ENCODE measurements at regions of chr11 and their contacts with region 1.

Region 1: GRCh38 chr11:59171508-59172322 is at the start of gene DTX4:
- DNase-seq: peak; percentile 84
- ATAC-seq: peak; percentile 89
- H3K4me3 ChIP-seq: peak within 1 kb of the TSS; percentile 44 to 59
- H3K27ac ChIP-seq: no peak within 1 kb of the TSS; the same call in 1 of the 2 replicates
- H3K4me1 ChIP-seq: peaks cover 14 to 39% of the 10 kb centered on the region in 2 experiments; a peak in 3 of 4 replicates
- H3K27me3 ChIP-seq: no peaks in the 10 kb centered on the region
- CTCF ChIP-seq: peak; percentile 78 to 94 (median 83)
- POLR2A ChIP-seq: no peak
- RAD21 ChIP-seq: peak; percentile 94
- total RNA-seq, gene DTX4: 7.6 TPM

Region 2: DNA sequence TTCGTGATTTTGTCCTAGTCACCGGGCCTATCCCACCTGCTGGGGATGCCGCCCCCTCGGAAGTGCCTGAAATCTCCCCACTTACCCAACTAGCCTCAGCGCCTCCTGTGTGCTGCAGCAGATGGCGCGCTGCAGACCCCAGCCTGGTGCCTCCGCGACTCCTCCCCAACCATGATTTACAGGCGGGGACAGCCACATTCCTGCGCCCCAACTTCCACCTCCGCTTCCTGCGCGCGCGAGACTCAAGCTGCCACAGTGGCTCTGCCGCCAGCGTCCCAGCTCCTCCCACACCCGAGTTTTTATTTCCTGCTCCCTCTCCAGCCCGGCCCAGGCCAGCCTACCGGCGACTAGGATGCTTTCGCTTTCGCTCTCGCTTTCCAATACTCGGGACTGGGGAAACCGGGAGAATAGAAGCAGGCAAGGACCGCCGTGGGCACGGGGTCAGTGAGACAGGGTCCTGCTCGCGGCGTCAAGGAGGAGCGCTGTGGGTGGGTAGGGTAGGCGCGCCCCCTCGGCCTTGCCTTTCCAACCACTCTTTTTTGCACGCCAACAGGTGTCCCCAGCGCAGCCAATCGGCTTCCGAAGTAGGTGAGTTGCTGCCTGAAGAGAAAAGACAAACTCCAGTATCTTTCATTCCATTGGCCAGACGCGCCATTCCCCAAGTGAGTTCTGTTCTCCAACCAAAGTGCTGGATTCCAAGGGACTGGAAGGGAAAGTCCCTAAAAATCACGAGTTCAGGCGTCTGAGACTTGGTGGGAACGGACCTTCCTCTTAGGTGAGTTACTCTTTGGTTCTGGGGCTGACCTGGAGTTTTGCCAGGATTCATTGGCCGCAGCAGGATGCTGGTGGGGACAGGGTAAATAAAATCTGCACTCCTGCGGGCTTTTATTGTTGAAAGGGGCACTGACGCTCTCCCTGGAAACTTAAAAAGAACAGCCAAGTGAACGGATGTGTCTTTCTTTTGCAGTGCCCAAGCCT is 28.9 kb before region 1 on chr11 and contains the start of gene FAM111A:
- CTCF ChIA-PET with region 1: interaction called, 10 read pairs
- POLR2A ChIA-PET with region 1: no interaction called
- RAD21 ChIA-PET with region 1: no interaction called
- intact Hi-C with region 1: no loop called
- DNase-seq: peak; percentile 83
- ATAC-seq: peak; percentile 85
- H3K4me3 ChIP-seq: peak within 1 kb of the TSS; percentile 51 to 79
- H3K27ac ChIP-seq: peak within 1 kb of the TSS; percentile 67
- H3K4me1 ChIP-seq: peaks cover 15 to 34% of the 10 kb centered on the region in 2 experiments
- H3K27me3 ChIP-seq: no peaks in the 10 kb centered on the region
- CTCF ChIP-seq: peak in 2 of 3 experiments; percentile 9 to 21; a peak in 1 of 6 replicates
- POLR2A ChIP-seq: no peak
- RAD21 ChIP-seq: no peak
- total RNA-seq, gene FAM111A: 30.3 TPM

Region 3: DNA sequence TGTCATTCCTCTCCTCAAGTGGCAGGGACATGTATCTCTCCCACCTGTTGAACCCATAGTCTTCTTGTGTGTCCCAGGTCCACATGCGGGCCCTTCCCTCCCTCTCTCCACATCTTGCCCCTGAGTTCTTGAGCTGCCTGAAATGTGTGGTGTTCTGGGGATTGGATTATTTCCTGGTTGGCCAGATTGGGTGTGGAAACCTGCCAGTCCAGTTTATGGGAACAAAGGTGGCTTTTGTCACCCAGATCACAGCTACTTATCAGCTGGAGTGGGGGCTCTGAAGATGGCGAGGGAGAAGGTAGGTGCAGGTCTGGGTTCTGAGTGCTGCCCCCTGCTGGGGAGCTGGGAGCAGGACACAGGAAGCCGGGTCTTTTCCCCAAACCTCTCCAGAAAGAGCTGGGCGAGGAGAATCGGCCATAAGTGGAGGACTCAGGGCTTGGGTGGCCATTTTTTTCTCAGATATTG is 14.4 kb after region 1 on chr11:
- CTCF ChIA-PET with region 1: interaction called, 68 read pairs
- POLR2A ChIA-PET with region 1: interaction called, 4 read pairs
- RAD21 ChIA-PET with region 1: interaction called, 6 to 10 read pairs
- intact Hi-C with region 1: loop called (anchors 1 kb)
- DNase-seq: peak; percentile 57
- ATAC-seq: peak; percentile 92
- H3K4me3 ChIP-seq: peak overlapping the region in 1 of 2 experiments; percentile 7; a peak in 1 of 4 replicates
- H3K27ac ChIP-seq: no peak overlapping the region; the same call in 1 of the 2 replicates
- H3K4me1 ChIP-seq: peaks cover 13 to 20% of the 10 kb centered on the region in 2 experiments; a peak in 3 of 4 replicates
- H3K27me3 ChIP-seq: no peaks in the 10 kb centered on the region
- CTCF ChIP-seq: peak; percentile 61 to 90 (median 85)
- POLR2A ChIP-seq: no peak
- RAD21 ChIP-seq: peak; percentile 42; the same call in 1 of the 2 replicates

Region 4: GRCh38 chr11:59207988-59208451 is 36.3 kb after region 1 on chr11:
- CTCF ChIA-PET with region 1: interaction called, 14 read pairs
- POLR2A ChIA-PET with region 1: no interaction called
- RAD21 ChIA-PET with region 1: no interaction called
- intact Hi-C with region 1: loop called (anchors 1 kb)
- DNase-seq: no peak
- ATAC-seq: peak; percentile 58
- H3K4me3 ChIP-seq: no peak overlapping the region
- H3K27ac ChIP-seq: no peak overlapping the region
- H3K4me1 ChIP-seq: no peaks in the 10 kb centered on the region; a peak in 2 of 4 replicates
- H3K27me3 ChIP-seq: no peaks in the 10 kb centered on the region
- CTCF ChIP-seq: peak; percentile 61 to 78 (median 70)
- POLR2A ChIP-seq: no peak
- RAD21 ChIP-seq: peak; percentile 72

Region 5: DNA sequence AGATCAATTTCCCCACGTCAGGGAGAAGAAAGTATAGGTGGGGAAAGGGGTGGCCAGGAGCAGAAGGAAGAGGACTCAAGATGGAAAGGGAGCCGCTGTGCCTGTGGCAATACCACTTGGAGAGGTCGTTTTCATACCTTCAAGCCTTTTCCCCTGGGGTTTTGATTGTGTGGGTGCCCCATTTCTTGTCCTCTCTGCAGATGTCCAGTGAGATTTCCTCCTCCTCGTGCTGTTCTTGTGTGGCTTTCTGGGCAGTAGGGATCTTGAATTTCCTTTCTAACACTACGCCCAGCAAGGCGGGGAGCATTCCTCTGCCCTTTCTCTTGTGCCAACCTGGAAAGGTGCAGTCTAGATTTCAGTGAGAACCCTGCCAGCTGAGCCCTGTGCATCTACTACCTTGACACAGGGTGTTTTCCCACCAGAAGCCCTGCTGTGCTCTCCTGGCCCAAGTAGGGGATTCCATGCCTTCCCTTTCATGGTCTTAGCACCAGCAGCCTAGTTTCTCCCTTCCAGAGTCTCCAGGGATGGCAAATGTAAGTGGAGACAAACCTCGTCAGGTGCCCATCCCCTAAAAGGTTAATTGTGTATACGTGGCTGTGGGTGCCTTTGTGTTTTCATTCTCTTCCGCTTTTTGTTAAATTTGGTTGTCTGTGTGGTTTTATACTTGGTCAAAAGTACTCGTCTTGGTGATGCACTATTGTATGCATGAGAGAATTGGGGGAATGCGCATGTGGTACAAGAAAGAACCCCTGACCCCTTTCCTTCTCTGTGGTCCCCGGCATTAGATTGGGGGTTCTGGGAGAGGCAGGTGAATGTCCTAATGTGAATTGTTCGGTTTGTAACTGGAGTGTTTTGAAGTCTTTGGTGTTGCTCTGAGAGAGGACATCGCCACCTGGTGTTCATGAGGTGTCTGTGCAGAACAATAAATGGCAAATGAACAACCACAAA is 112.4 kb after region 1 on chr11:
- CTCF ChIA-PET with region 1: interaction called, 5 read pairs
- POLR2A ChIA-PET with region 1: no interaction called
- RAD21 ChIA-PET with region 1: no interaction called
- intact Hi-C with region 1: loop called (anchors 2 kb)
- DNase-seq: peak; percentile 29
- ATAC-seq: peak; percentile 78
- H3K4me3 ChIP-seq: no peak overlapping the region
- H3K27ac ChIP-seq: no peak overlapping the region
- H3K4me1 ChIP-seq: no peaks in the 10 kb centered on the region
- H3K27me3 ChIP-seq: peaks cover 17% of the 10 kb centered on the region; the same call in 1 of the 2 replicates
- CTCF ChIP-seq: peak; percentile 62 to 80 (median 78); a peak in 5 of 6 replicates
- POLR2A ChIP-seq: no peak
- RAD21 ChIP-seq: peak; percentile 65

Region 6: GRCh38 chr11:59429924-59430516 is 258.3 kb after region 1 on chr11:
- CTCF ChIA-PET with region 1: interaction called, 9 read pairs
- POLR2A ChIA-PET with region 1: no interaction called
- RAD21 ChIA-PET with region 1: interaction called in 1 of 2 experiments, 3 read pairs
- intact Hi-C with region 1: loop called (anchors 1 kb)
- DNase-seq: peak; percentile 56
- ATAC-seq: peak; percentile 85
- H3K4me3 ChIP-seq: no peak overlapping the region
- H3K27ac ChIP-seq: no peak overlapping the region
- H3K4me1 ChIP-seq: no peaks in the 10 kb centered on the region
- H3K27me3 ChIP-seq: no peaks in the 10 kb centered on the region
- CTCF ChIP-seq: peak; percentile 65 to 91 (median 76); a peak in 5 of 6 replicates
- POLR2A ChIP-seq: no peak
- RAD21 ChIP-seq: peak; percentile 80